CD8-positive, alpha-beta memory T cell (primary cell): ENCODE measurements at regions of chr11 and their contacts with region 1.

Region 1: GRCh38 chr11:67482825-67483798 is at the start of gene AIP:
- DNase-seq: peak; percentile 96 to 98 (median 96)
- H3K4me3 ChIP-seq: peak within 1 kb of the TSS; percentile 96
- H3K4me3 Mint-ChIP-seq: peak within 1 kb of the TSS; percentile 87 to 99 (median 95)
- H3K27ac ChIP-seq: peak within 1 kb of the TSS; percentile 80
- H3K27ac Mint-ChIP-seq: peak within 1 kb of the TSS; percentile 90 to 100 (median 98)
- H3K4me1 ChIP-seq: peaks cover 51% of the 10 kb centered on the region
- H3K4me1 Mint-ChIP-seq: peaks cover 49 to 58% (median 57%) of the 10 kb centered on the region in 3 donors
- H3K27me3 ChIP-seq: no peaks in the 10 kb centered on the region
- H3K27me3 Mint-ChIP-seq: no peaks in the 10 kb centered on the region
- total RNA-seq, gene AIP: 160 to 171 TPM

Region 2: GRCh38 chr11:67382276-67383136 is 100.6 kb before region 1 on chr11:
- CTCF ChIA-PET with region 1: interaction called, 11 read pairs
- POLR2A ChIA-PET with region 1: no interaction called
- DNase-seq: peak; percentile 76 to 88 (median 77)
- H3K4me3 ChIP-seq: no peak overlapping the region
- H3K4me3 Mint-ChIP-seq: no peak overlapping the region
- H3K27ac ChIP-seq: no peak overlapping the region
- H3K27ac Mint-ChIP-seq: peak overlapping the region in 6 of 8 donors; percentile 2 to 80 (median 72)
- H3K4me1 ChIP-seq: peaks cover 8% of the 10 kb centered on the region
- H3K4me1 Mint-ChIP-seq: peaks cover 5 to 16% (median 11%) of the 10 kb centered on the region in 3 donors
- H3K27me3 ChIP-seq: peaks cover 5% of the 10 kb centered on the region
- H3K27me3 Mint-ChIP-seq: peaks cover 0 to 3% of the 10 kb centered on the region in 2 donors

Region 3: DNA sequence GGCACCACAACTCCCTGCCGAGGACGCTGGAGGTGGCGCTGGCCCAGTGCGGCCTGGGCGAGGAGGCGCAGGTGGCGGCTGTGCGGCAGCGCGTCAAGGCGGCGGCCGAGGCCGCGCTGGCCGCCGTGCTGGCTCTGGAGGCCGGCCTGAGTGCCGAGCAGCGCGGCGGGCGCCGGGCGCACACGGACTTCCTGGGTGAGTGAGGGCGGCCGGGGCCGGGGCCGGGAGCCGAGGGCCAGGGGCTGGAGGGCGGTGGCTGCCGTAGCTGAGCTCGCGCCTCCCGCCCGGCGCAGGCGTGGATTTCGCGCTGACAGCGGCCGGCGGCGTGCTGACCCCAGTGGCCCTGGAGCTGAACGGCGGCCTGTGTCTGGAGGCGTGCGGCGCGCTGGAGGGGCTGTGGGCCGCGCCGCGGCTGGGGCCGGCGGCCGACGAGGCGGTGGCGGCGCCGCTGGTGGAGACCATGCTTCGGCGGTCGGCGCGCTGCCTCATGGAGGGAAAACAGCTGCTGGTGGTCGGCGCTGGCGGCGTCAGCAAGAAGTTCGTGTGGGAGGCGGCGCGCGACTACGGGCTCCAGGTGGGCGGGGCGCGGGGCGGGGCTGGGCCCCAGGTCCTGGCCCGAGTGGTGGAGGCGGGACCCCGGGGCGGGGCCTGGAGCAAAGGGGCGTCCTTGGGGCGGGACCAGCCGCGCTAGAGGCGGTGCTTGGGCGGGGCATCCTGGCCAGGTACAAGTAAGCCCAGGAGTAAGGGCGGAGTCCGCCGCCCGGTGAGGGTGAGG is 62.3 kb before region 1 on chr11:
- CTCF ChIA-PET with region 1: no interaction called
- POLR2A ChIA-PET with region 1: interaction called, 11 read pairs
- DNase-seq: peak; percentile 97 to 99 (median 98)
- H3K4me3 ChIP-seq: peak overlapping the region; percentile 58
- H3K4me3 Mint-ChIP-seq: peak overlapping the region; percentile 70 to 90 (median 83)
- H3K27ac ChIP-seq: peak overlapping the region; percentile 51
- H3K27ac Mint-ChIP-seq: peak overlapping the region; percentile 75 to 95 (median 88)
- H3K4me1 ChIP-seq: peaks cover 49% of the 10 kb centered on the region
- H3K4me1 Mint-ChIP-seq: peaks cover 43 to 62% (median 51%) of the 10 kb centered on the region in 3 donors
- H3K27me3 ChIP-seq: no peaks in the 10 kb centered on the region
- H3K27me3 Mint-ChIP-seq: peaks cover 0 to under 1% of the 10 kb centered on the region in 2 donors

Region 4: DNA sequence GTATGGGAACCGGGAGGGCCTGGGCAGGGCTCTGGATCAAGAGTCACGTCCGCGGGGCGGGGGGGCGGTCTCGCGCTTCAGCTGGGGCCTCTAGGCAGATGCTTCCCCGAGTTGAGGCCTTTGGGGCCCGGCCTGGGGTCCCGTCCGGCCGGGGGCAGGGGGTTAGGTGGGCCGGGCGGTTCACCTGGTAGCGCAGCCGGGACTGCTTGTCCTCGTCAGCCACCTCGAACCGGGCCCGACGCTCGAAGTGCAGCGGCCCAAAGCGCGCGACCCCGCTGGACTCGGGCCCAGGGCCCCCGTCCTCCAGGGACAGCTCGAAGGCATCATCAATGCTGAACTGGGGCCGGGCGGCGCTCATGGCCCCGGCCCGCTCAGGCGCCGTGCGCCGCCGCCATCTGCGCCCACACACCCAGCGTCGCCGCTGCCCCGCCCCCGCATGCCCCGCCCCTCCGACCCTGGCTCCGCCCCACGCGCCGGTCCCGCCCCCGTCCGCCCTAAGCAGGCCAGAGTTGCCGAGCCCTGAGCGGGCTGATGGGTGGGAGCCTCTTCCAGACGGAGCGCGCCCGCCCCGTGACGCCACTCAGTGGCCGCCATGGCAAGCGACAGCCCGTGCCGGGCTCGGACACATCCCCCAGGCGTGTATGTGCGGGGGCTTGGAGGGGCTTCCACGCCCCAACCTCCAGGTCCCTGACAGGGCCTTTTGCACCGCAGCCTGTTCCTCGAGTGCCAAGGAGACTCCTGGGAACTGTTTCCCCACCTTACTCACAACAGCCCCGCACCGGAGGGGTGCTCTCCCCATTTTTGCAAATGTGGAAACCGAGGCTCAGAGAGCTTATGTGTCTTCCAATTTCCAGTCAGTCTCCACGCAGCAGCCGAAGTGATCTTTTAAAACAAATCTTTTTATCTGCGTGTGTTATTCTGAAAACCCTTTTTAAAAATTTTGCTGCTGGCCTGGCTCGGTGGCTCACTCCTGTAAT is 14.0 kb before region 1 on chr11 and contains the start of gene TMEM134:
- CTCF ChIA-PET with region 1: interaction called, 15 read pairs
- POLR2A ChIA-PET with region 1: interaction called, 12 read pairs
- DNase-seq: peak; percentile 86 to 95 (median 87)
- H3K4me3 ChIP-seq: peak within 1 kb of the TSS; percentile 74
- H3K4me3 Mint-ChIP-seq: peak within 1 kb of the TSS; percentile 87 to 92 (median 88)
- H3K27ac ChIP-seq: peak within 1 kb of the TSS; percentile 70
- H3K27ac Mint-ChIP-seq: peak within 1 kb of the TSS; percentile 64 to 94 (median 88)
- H3K4me1 ChIP-seq: peaks cover 34% of the 10 kb centered on the region
- H3K4me1 Mint-ChIP-seq: peaks cover 11 to 42% (median 29%) of the 10 kb centered on the region in 3 donors
- H3K27me3 ChIP-seq: no peaks in the 10 kb centered on the region
- H3K27me3 Mint-ChIP-seq: no peaks in the 10 kb centered on the region
- total RNA-seq, gene TMEM134: 49.6 to 57.9 TPM

Region 5: GRCh38 chr11:67698247-67698646 is 215.1 kb after region 1 on chr11:
- CTCF ChIA-PET with region 1: no interaction called
- POLR2A ChIA-PET with region 1: no interaction called
- DNase-seq: no peak
- H3K4me3 ChIP-seq: no peak overlapping the region
- H3K4me3 Mint-ChIP-seq: no peak overlapping the region
- H3K27ac ChIP-seq: no peak overlapping the region
- H3K27ac Mint-ChIP-seq: peak overlapping the region in 1 of 8 donors; percentile 74
- H3K4me1 ChIP-seq: no peaks in the 10 kb centered on the region
- H3K4me1 Mint-ChIP-seq: no peaks in the 10 kb centered on the region
- H3K27me3 ChIP-seq: peaks cover 4% of the 10 kb centered on the region
- H3K27me3 Mint-ChIP-seq: peaks cover 12 to 47% of the 10 kb centered on the region in 2 donors